CD4-positive, alpha-beta T cell (primary cell): ENCODE measurements at regions of chr12 and their contacts with region 1.

Region 1: GRCh38 chr12:7142056-7142644 is 12.0 kb downstream of the CLSTN3 start:
- DNase-seq: peak; percentile 20 to 70 (median 48)
- ATAC-seq: peak; percentile 90
- H3K4me3 ChIP-seq: no peak overlapping the region
- H3K4me3 Mint-ChIP-seq: no peak overlapping the region
- H3K27ac ChIP-seq: no peak overlapping the region
- H3K27ac Mint-ChIP-seq: no peak overlapping the region
- H3K4me1 ChIP-seq: no peaks in the 10 kb centered on the region
- H3K4me1 Mint-ChIP-seq: no peaks in the 10 kb centered on the region
- H3K27me3 ChIP-seq: no peaks in the 10 kb centered on the region
- H3K27me3 Mint-ChIP-seq: no peaks in the 10 kb centered on the region
- CTCF ChIP-seq: peak; percentile 48

Region 2: DNA sequence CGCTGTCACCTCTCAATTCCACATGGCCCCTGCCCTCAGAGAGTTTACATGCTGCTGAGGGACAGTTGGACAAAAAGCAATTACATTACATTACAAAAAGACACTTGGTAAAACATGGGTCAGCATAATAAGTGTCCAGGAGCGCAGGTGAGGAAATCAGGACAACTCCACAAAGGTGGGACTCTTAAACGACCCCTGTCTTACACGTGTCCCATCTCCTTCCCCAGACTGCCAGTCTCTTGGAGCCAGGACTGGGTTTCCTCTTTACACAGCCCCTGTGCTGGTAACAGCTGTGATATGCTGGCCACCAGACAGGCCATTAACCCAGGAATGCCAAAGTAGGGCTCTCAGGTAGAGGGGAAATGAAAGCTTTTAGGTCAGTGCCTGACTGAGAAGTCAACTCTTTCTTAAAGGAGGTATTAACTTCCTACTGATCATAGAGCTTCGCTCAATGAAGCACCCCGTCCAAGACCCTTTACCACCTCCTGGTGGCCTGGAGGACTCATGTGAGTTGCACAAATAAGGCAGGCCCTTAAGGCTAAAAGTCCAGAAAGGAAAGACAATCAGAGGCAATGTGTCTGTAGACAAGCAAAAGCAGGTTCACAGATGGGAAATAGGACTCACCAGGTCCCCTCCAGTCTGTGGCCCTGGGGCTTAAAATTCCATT is 1252.6 kb before region 1 on chr12:
- CTCF ChIA-PET with region 1: no interaction called
- POLR2A ChIA-PET with region 1: no interaction called
- intact Hi-C with region 1: no loop called
- DNase-seq: no peak
- ATAC-seq: no peak
- H3K4me3 ChIP-seq: no peak overlapping the region
- H3K4me3 Mint-ChIP-seq: no peak overlapping the region
- H3K27ac ChIP-seq: no peak overlapping the region
- H3K27ac Mint-ChIP-seq: no peak overlapping the region
- H3K4me1 ChIP-seq: peaks cover 2% of the 10 kb centered on the region
- H3K4me1 Mint-ChIP-seq: peaks cover 9% of the 10 kb centered on the region
- H3K27me3 ChIP-seq: peaks cover 0 to 24% of the 10 kb centered on the region in 2 experiments
- H3K27me3 Mint-ChIP-seq: peaks cover 69% of the 10 kb centered on the region
- CTCF ChIP-seq: no peak

Region 3: GRCh38 chr12:7293670-7294069 is 151.5 kb after region 1 on chr12:
- CTCF ChIA-PET with region 1: no interaction called
- POLR2A ChIA-PET with region 1: no interaction called
- intact Hi-C with region 1: no loop called
- DNase-seq: no peak
- ATAC-seq: no peak
- H3K4me3 ChIP-seq: no peak overlapping the region
- H3K4me3 Mint-ChIP-seq: no peak overlapping the region
- H3K27ac ChIP-seq: no peak overlapping the region
- H3K27ac Mint-ChIP-seq: no peak overlapping the region
- H3K4me1 ChIP-seq: no peaks in the 10 kb centered on the region
- H3K4me1 Mint-ChIP-seq: no peaks in the 10 kb centered on the region
- H3K27me3 ChIP-seq: no peaks in the 10 kb centered on the region
- H3K27me3 Mint-ChIP-seq: peaks cover 9% of the 10 kb centered on the region
- CTCF ChIP-seq: no peak

Region 4: DNA sequence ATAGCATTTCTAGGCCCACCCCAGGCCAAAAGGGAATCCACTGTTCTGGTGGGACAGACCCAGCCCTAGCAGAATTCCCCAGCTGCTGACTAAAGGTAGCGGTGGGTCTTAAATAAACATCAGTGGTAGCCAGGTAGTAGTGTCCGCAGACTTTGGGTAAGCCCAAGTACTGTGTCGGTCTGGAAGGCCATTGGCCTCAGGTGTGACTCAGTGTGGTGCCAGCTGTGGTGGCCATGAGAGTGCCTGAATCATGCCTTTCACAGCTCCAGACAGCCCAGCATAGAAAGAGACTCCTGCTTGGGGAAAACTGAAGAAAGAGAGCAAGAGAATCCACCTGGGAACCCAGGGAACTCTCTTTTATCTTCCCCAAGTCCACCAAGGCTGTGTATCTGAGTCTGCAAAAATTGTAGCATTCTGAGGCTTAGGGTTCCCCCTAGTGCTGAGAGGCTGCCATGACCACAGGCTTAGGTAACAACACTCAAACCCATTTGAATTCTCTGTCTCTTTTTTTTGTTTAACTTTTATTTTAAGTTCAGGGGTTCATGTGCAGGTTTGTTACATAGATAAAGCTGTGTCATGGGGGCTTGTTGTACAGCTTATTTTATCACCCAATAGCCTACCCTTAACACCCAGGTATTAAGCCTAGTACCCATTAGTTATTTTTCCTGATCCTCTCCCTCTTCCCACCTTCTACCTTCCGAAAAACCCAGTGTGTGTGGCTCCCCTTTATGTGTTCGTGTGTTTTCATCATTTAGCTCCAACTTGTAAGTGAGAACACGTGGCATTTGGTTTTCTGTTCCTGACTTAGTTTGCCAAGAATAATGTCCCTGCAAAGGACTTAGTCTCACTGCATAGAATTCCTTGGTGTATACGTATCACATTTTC is 318.5 kb after region 1 on chr12:
- CTCF ChIA-PET with region 1: no interaction called
- POLR2A ChIA-PET with region 1: no interaction called
- intact Hi-C with region 1: loop called in 1 of 2 experiments (anchors 2 kb)
- DNase-seq: peak; percentile 19 to 73 (median 37)
- ATAC-seq: peak; percentile 84
- H3K4me3 ChIP-seq: no peak overlapping the region
- H3K4me3 Mint-ChIP-seq: no peak overlapping the region
- H3K27ac ChIP-seq: no peak overlapping the region
- H3K27ac Mint-ChIP-seq: no peak overlapping the region
- H3K4me1 ChIP-seq: no peaks in the 10 kb centered on the region
- H3K4me1 Mint-ChIP-seq: no peaks in the 10 kb centered on the region
- H3K27me3 ChIP-seq: no peaks in the 10 kb centered on the region
- H3K27me3 Mint-ChIP-seq: peaks cover 5% of the 10 kb centered on the region
- CTCF ChIP-seq: peak; percentile 82